ENCODE measurements at regions of chr3 and their contacts with region 1.

Region 1: DNA sequence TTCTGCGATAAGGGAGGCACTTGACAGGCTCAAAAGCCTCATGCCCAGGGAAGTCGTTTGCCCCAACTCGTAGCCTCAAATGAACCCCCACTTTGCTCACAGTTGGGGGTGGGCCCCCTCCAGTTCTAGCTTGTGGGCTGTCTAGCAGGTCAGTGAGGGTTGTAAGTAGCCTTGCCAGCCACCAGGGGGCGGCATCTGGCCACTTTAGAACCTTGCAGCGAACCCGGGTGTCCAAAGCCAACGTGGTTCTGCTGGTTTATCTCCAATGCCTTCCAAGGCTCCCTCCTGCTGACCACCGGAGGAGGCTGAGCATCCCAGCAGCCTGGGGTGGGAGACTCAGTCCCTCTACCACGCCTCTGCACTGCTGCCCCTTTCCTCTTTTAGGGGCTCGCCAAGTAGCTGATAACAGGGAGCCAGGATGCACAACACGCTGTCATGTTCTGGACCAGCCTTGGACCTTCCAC is 9.2 kb upstream of the RBSN start:
- DNase-seq: peak; percentile 50
- H3K4me3 ChIP-seq: no peak overlapping the region
- H3K27ac ChIP-seq: no peak overlapping the region
- H3K27me3 ChIP-seq: peaks cover 9% of the 10 kb centered on the region
- CTCF ChIP-seq: peak; percentile 89

Region 2: GRCh38 chr3:14525685-14526631 is 582.2 kb before region 1 on chr3:
- CTCF ChIA-PET with region 1: no interaction called
- POLR2A ChIA-PET with region 1: no interaction called
- DNase-seq: no peak
- H3K4me3 ChIP-seq: no peak overlapping the region
- H3K27ac ChIP-seq: no peak overlapping the region
- H3K27me3 ChIP-seq: peaks cover 21% of the 10 kb centered on the region
- CTCF ChIP-seq: no peak

Region 3: DNA sequence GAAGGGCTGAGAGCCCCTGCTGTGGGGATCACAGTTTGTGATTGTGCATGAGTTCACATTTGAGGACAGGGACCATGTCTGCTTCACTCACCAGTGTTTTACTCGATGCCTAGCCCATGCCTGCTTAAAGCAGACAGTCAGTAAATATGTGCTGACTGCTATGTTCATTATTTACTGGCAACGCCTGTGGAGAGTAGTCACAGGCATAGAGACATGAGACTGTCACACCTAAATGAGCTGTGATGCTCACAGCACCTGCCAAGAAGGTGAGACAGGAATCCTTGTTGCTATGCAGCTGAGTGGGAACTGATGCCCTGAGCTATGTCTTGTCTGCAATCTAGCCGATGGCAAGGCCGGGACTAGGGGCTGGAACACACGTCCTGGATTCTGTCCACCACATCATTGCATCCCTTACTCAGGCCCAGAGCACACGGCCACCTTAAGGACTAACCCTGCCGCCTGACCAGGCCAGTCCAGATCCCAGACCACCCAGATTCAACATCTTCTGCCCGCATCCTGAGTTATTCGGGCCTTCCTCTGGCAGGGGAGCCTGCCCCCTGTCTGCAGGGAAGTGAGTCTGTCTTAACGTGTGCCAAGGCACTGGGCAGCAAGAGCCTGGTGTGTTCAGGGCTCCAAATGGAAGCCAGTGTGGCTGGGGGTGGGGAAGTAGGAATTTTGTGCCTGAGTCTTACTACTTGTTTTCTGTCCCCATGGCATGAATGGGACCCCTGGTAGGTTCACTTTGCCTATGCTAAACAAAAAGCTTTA is 244.6 kb before region 1 on chr3:
- CTCF ChIA-PET with region 1: no interaction called
- POLR2A ChIA-PET with region 1: no interaction called
- DNase-seq: no peak
- H3K4me3 ChIP-seq: no peak overlapping the region
- H3K27ac ChIP-seq: no peak overlapping the region
- H3K27me3 ChIP-seq: no peaks in the 10 kb centered on the region
- CTCF ChIP-seq: 0 out of 2 replicates have a peak, but pooled peaks have one; percentile 27

Region 4: GRCh38 chr3:15120986-15121385 is 12.9 kb after region 1 on chr3:
- CTCF ChIA-PET with region 1: interaction called, 50 read pairs
- POLR2A ChIA-PET with region 1: no interaction called
- DNase-seq: no peak
- H3K4me3 ChIP-seq: no peak overlapping the region
- H3K27ac ChIP-seq: no peak overlapping the region
- H3K27me3 ChIP-seq: peaks cover 5% of the 10 kb centered on the region
- CTCF ChIP-seq: no peak

Region 5: DNA sequence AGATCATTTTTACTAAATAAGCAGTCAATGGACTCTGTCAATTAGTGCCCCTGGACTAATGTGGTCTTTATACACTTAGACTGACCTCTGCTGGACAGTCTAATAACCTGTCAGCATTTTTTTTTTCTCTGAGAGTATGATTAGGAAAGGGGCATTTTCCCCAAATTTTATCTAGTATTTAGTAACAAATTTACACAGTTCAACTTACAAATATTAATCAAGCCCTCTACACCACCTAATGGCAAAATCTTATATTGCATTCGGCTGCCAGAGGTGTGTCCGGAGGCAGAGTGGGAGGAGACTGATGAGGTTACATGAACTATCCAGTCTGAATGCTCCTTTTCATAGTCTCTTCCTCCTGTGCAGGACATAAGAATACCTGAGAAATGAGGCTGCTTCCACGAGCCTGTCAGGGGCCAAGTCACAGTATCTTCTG is 449.4 kb after region 1 on chr3:
- CTCF ChIA-PET with region 1: interaction called, 13 read pairs
- POLR2A ChIA-PET with region 1: no interaction called
- DNase-seq: peak; percentile 39
- H3K4me3 ChIP-seq: no peak overlapping the region
- H3K27ac ChIP-seq: no peak overlapping the region
- H3K27me3 ChIP-seq: no peaks in the 10 kb centered on the region
- CTCF ChIP-seq: peak; percentile 67

Region 6: GRCh38 chr3:16033889-16034687 is 926.0 kb after region 1 on chr3:
- CTCF ChIA-PET with region 1: no interaction called
- POLR2A ChIA-PET with region 1: no interaction called
- DNase-seq: no peak
- H3K4me3 ChIP-seq: no peak overlapping the region
- H3K27ac ChIP-seq: no peak overlapping the region
- H3K27me3 ChIP-seq: no peaks in the 10 kb centered on the region
- CTCF ChIP-seq: no peak

Measured in AG04450 (cell line).